CD14-positive monocyte (primary cell): ENCODE measurements at regions of chr13 and their contacts with region 1.

Region 1: GRCh38 chr13:29496240-29496712 is 99.2 kb downstream of the SLC7A1 start:
- DNase-seq: peak; percentile 67 to 81 (median 75)
- H3K4me3 ChIP-seq: peak overlapping the region in 1 of 3 experiments; percentile 68
- H3K4me3 Mint-ChIP-seq: peak overlapping the region; percentile 52 to 87
- H3K27ac ChIP-seq: peak overlapping the region; percentile 45 to 77
- H3K27ac Mint-ChIP-seq: peak overlapping the region; percentile 84 to 94 (median 89)
- H3K4me1 ChIP-seq: peaks cover 35% of the 10 kb centered on the region in 2 donors
- H3K4me1 Mint-ChIP-seq: peaks cover 34% of the 10 kb centered on the region
- H3K27me3 ChIP-seq: no peaks in the 10 kb centered on the region
- H3K27me3 Mint-ChIP-seq: peaks cover 0 to 8% (median 1%) of the 10 kb centered on the region in 3 donors
- CTCF ChIP-seq: no peak

Region 2: DNA sequence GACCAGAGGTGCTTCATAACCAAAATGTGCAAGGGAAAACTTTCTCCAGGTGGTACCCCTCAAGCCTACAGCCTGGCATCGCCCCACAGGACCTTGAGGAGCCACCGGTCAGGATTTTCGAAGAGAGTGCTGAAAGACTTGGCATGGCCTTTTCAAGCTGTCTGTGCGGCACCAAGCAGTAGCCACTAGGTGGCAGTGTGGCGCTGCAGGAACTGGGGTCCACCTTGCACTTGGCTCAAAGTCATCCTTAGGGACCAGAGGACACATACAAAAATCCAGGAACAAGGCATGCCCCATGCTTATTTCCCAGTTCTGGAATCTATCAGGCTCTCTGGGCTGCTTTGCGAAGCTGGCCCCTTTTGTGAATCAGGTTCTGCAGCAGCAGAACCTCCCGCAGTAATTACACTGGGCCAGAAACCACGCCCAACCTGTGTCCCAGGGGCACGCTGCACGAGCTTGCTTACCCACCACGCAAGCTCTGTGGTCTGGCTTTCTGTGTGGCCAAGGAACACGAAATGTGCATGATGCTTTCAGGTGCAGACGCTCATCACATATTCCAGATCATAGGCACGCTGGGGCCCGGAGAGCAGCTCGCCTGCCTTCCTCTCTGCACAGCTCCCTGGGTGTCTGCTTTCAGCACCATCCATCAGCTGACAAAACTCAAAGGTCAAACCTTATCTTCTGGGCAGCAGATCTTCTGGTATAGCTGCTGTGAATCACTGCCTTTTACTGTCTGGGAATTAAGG is 12.0 kb after region 1 on chr13:
- intact Hi-C with region 1: no loop called
- DNase-seq: peak; percentile 50 to 66 (median 66)
- H3K4me3 ChIP-seq: no peak overlapping the region
- H3K4me3 Mint-ChIP-seq: no peak overlapping the region
- H3K27ac ChIP-seq: no peak overlapping the region
- H3K27ac Mint-ChIP-seq: no peak overlapping the region
- H3K4me1 ChIP-seq: peaks cover 0 to under 1% of the 10 kb centered on the region in 2 donors
- H3K4me1 Mint-ChIP-seq: peaks cover 2% of the 10 kb centered on the region
- H3K27me3 ChIP-seq: no peaks in the 10 kb centered on the region
- H3K27me3 Mint-ChIP-seq: peaks cover 0 to 11% (median 4%) of the 10 kb centered on the region in 3 donors
- CTCF ChIP-seq: peak; percentile 98

Region 3: DNA sequence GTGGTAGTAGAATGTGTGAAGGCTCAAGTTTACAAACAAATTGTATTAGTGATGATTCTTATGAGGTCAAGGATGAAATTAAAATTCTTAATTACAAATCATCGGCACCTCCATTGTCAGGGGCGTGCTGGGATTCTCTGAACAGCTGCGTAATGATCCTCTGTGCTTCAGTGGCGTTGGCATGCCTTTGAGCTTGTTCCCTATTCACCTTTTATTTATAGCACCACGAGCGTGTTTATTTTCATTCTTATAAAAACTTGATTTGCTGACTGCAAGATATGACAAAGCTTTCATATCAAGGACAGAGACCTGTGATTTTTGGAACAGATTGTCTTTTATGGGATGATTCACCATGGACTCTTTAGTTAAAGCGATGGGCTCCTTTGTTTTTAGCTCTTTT is 372.3 kb after region 1 on chr13:
- intact Hi-C with region 1: no loop called
- DNase-seq: no peak
- H3K4me3 ChIP-seq: no peak overlapping the region
- H3K4me3 Mint-ChIP-seq: no peak overlapping the region
- H3K27ac ChIP-seq: no peak overlapping the region
- H3K27ac Mint-ChIP-seq: no peak overlapping the region
- H3K4me1 ChIP-seq: no peaks in the 10 kb centered on the region
- H3K4me1 Mint-ChIP-seq: no peaks in the 10 kb centered on the region
- H3K27me3 ChIP-seq: no peaks in the 10 kb centered on the region
- H3K27me3 Mint-ChIP-seq: peaks cover 2 to 9% (median 5%) of the 10 kb centered on the region in 3 donors
- CTCF ChIP-seq: no peak

Region 4: DNA sequence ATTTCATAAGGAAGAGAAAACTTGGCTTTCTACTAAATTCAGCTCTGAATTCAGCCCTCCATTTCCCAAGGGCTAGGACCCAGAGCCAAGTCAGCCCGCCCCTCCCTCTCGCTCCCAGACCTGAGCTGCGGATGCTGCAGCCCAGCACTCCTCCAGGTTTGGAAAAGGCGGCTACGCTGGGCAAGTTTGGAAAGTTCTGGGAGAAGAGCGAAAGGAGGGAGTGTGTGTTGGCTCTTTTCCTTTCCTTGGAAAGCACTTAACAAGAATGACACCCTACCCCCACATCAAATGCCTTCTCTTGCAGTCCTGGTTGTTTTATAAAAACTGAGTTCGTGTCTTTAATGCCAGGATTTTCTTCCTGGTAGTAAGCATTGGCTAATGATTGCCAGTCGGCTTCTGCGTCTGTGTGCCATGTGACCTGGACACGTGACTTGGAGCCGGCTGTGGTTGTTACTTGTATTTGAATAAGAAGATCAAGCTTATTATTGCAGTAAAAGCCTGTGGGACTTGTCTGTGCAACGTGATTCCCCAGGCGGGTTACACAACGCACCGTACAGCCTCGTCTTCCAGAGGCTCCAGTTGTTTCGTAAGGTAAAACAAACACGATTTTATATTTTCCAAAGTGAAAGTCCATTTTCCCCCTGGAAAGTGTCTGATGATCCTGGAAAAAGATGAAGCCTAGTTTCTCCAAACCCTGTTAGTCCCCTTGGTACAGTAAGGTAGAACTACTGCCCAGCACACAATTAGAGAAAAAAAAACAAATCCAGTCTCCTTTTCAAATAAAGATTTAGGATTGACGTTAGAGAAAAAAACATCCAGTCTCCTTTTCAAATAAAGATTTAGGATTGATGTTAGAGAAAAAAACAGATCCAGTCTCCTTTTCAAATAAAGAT is 899.2 kb after region 1 on chr13:
- intact Hi-C with region 1: loop called in 1 of 2 experiments (anchors 10 kb)
- DNase-seq: peak; percentile 75 to 91 (median 90)
- H3K4me3 ChIP-seq: peak overlapping the region; percentile 65 to 95 (median 65)
- H3K4me3 Mint-ChIP-seq: peak overlapping the region; percentile 90 to 98
- H3K27ac ChIP-seq: peak overlapping the region; percentile 78 to 98
- H3K27ac Mint-ChIP-seq: peak overlapping the region; percentile 91 to 96 (median 95)
- H3K4me1 ChIP-seq: peaks cover 8 to 11% of the 10 kb centered on the region in 2 donors
- H3K4me1 Mint-ChIP-seq: peaks cover 8% of the 10 kb centered on the region
- H3K27me3 ChIP-seq: no peaks in the 10 kb centered on the region
- H3K27me3 Mint-ChIP-seq: peaks cover 0 to 10% (median 1%) of the 10 kb centered on the region in 3 donors
- CTCF ChIP-seq: no peak